ENCODE measurements at regions of chr12 and their contacts with region 1.

Region 1: DNA sequence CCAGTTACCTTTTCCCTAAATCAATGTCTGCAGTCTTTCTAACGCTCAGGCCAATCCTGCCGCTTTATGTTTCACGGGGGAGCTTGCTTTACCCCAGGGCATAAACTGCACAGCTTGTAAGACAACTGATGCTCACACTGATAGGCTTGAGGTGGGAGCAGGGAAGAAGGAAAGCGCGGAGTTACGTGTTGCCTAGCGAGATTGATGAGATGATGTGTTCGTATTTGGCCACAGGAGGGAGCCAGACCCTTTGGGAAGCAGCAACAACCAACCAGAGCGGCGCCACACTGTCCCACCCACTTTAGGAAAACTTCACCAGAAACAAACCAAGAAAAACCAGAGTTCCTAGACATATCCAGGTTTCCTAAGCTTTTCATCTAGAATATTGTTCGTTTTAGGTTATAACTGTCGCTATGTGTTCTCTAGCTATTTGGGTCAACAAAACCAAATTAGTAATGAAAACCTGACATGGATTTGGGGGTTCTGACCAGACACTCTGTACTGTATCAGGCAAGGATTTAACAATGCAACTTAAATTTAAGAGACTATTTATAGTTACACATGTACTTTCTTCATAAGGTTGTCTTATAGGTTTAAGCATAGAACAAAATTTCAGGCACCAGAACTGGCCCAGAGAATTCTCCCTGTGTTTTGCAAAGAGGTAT is 2.4 kb downstream of the IL26 start:
- DNase-seq: peak; percentile 41
- H3K4me3 ChIP-seq: no peak overlapping the region
- H3K27ac ChIP-seq: no peak overlapping the region
- H3K4me1 ChIP-seq: peaks cover 3% of the 10 kb centered on the region
- H3K27me3 ChIP-seq: no peaks in the 10 kb centered on the region
- CTCF ChIP-seq: peak; percentile 80 to 99 (median 93)

Region 2: GRCh38 chr12:68267892-68268396 is 44.7 kb after region 1 on chr12:
- dilution Hi-C with region 1: no loop called
- DNase-seq: no peak
- H3K4me3 ChIP-seq: no peak overlapping the region
- H3K27ac ChIP-seq: peak overlapping the region; percentile 45
- H3K4me1 ChIP-seq: peaks cover 4% of the 10 kb centered on the region
- H3K27me3 ChIP-seq: no peaks in the 10 kb centered on the region
- CTCF ChIP-seq: no peak

Region 3: DNA sequence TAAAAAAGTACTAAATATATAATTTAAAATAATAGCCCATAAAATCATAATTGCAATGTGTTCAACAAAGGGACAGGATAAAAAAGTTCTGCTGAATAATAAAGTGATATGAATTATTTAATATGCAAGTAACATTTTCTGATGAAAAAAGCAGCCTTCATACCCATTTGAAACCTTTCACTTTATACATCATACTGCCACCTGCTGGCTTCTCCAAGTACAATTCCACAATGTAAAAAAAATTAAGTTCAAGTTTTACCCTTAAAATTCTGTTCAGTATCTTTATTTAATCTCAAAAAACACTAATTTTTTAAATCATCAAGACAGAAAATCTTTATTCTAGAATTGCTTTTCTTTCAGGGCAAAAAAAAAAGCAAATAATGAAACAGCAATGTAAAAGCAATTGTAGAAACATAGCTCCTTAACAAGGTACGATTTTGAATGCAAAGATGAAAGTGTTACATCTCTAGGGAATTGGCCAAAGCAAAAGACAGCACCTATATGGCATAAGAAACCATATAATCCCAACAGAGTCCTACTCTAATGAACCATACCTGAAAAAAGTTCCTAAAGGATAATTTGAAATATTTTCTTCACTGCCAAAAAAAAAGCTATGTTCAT is 93.9 kb after region 1 on chr12:
- dilution Hi-C with region 1: loop called (anchors 25 kb)
- DNase-seq: no peak
- H3K4me3 ChIP-seq: no peak overlapping the region
- H3K27ac ChIP-seq: no peak overlapping the region
- H3K4me1 ChIP-seq: no peaks in the 10 kb centered on the region
- H3K27me3 ChIP-seq: no peaks in the 10 kb centered on the region
- CTCF ChIP-seq: peak in 2 of 3 experiments; percentile 24 to 34